Activated naive CD4-positive, alpha-beta T cell treated with anti-CD3 and anti-CD28 coated beads, Interleukin-2, amount 10 ng/mL, durations not matched to agents 7 days and 5 days (primary cell): ENCODE measurements at regions of chr12 and their contacts with region 1.

Region 1: GRCh38 chr12:67943226-67943892 is 45.9 kb upstream of the IFNG-AS1 start:
- DNase-seq: peak; percentile 78
- H3K4me3 Mint-ChIP-seq: no peak overlapping the region
- H3K27ac Mint-ChIP-seq: no peak overlapping the region
- H3K4me1 Mint-ChIP-seq: no peaks in the 10 kb centered on the region
- H3K27me3 Mint-ChIP-seq: peaks cover 3% of the 10 kb centered on the region

Region 2: DNA sequence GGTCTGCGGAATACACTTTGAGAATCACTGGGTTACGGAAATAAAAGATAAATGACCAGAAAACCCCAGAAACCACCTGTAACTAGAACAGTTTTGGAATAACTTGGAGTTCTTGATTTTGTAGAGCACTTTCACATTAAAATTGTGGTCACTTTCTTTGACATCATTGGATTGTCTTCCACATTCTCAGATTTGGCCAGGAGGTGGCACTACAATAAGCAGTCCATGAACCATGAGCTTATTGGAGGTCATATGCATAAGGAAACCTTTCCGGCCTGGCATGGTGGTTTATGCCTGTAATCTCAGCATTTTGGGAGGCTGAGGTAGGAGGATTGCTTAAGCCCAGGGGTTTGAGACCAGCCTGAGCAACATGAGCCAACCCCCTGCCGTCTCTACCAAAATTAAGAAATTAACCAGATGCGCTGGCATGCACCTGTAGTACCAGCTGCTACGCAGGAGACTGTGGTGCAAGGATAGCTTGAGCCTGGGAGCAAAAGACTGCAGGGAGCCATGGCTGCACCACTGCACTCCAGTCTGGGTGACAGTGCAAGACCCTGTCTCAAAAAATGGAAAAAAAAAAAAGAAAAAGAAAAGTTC is 781.9 kb before region 1 on chr12:
- CTCF ChIA-PET with region 1: interaction called, 13 read pairs
- DNase-seq: peak; percentile 60
- H3K4me3 Mint-ChIP-seq: no peak overlapping the region
- H3K27ac Mint-ChIP-seq: no peak overlapping the region
- H3K4me1 Mint-ChIP-seq: no peaks in the 10 kb centered on the region
- H3K27me3 Mint-ChIP-seq: no peaks in the 10 kb centered on the region

Region 3: DNA sequence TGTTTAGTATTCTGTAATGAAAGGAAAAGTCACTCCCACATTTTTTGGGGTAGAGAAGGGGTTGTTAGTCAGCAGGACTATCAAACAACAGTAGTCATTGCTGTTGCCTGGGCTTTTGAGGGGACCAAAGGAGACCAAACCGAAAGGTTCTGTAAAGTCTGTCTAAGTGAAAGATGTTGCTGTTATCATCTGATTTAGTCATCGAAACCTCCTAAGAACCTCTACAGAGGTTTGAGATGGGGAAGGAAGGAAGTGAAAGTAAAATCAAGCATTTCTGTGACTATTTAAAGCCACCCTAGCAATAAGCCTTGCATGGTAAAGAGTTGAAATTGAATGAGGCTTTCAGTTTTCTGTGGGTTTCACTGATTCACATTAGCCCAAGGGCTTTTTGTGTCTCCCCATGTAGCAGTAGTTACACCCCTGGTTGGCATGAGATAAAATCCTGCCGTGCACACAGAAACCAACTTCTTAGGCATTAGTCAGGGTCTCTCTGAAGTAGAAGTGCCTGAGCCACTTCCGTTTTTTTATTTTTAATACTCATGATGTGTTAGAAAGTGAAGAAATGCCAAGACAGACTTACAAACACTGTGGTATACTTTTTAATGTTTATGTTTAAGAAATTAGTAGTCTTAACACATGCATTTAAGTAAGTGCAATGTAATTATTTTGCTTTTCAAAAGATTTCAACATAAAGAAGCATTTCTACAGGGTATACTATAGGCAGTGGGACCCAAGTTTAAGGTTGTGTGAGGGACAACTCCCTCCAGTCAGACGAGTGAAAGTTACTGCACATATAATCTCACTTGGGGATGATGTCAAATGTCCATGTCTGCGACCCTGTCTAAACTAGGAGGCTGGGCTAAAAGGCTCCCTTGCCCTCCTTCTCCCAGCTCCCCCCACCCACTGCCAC is 244.4 kb before region 1 on chr12:
- CTCF ChIA-PET with region 1: no interaction called
- DNase-seq: peak; percentile 66
- H3K4me3 Mint-ChIP-seq: peak overlapping the region; percentile 59
- H3K27ac Mint-ChIP-seq: peak overlapping the region; percentile 87
- H3K4me1 Mint-ChIP-seq: peaks cover 63% of the 10 kb centered on the region
- H3K27me3 Mint-ChIP-seq: peaks cover 15% of the 10 kb centered on the region

Region 4: GRCh38 chr12:67892259-67893021 is 50.9 kb before region 1 on chr12:
- CTCF ChIA-PET with region 1: no interaction called
- DNase-seq: no peak
- H3K4me3 Mint-ChIP-seq: no peak overlapping the region
- H3K27ac Mint-ChIP-seq: no peak overlapping the region
- H3K4me1 Mint-ChIP-seq: no peaks in the 10 kb centered on the region
- H3K27me3 Mint-ChIP-seq: no peaks in the 10 kb centered on the region